Calu3 (cell line): ENCODE measurements at regions of chr2 and their contacts with region 1.

Region 1: DNA sequence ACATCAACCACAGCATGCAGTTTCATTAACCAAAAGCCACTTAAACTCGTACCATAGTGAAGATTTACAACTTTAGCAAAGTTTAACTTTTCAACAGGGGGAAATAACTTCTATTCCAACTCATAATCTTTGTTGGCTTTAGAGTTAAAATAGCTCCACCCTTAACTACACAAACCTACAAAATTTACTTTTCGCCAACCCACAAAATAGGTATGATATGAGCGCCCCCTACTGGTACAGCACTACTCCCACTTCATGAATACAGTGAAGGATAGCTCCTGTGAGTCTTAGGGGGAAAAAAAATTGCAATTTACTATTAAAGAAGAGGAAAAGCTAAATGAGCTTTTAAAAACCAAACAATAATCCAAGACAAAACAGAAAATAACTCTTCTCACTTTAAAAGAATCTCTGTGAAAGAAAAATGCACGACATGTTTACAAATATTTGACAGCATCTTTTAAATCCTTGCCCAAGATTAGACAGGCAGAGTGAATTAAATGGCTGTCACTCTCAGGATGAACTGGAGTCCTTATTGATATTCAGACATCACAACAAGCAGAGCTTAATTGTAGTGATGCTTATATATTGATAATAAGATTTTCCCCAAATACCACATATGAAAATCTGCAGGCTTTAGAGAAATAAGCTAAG is 32.2 kb downstream of the TMEFF2 start:
- DNase-seq: peak; percentile 78
- H3K4me3 Mint-ChIP-seq: no peak overlapping the region
- H3K27ac Mint-ChIP-seq: no peak overlapping the region
- H3K4me1 Mint-ChIP-seq: no peaks in the 10 kb centered on the region
- H3K27me3 Mint-ChIP-seq: no peaks in the 10 kb centered on the region
- CTCF ChIP-seq: peak; percentile 91

Region 2: DNA sequence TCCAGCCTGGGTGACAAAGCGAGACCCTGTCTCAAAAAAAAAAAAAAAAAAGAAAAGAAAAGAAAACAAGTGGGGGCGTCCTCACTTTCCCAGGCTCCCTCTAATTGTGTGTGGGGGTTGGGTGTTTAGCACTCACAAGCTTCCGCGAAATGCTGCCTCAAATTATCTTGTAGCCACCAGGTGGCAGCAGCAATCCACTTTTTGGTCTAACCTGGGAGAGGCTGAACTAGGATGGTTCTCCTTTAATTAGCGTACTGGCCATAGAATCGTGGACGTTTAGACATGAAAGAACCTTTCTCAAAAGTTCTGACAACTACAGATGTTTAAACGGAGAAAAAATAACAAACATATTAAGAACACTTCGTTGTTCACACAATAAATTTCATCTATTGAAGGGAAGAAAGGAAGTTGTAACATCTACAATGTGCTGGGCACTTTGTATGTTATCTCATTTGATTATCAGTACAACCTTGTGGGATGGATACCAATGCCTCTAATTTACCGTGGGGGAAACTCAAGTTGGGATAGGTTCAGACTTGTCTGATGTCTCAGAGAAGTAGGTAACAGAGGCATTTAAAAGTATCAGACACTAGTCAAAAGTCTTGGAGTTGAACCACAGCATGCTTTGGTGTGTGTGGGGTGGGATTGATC is 607.3 kb before region 1 on chr2:
- CTCF ChIA-PET with region 1: interaction called, 8 read pairs
- intact Hi-C with region 1: loop called (anchors 1 kb)
- DNase-seq: peak; percentile 88
- H3K4me3 Mint-ChIP-seq: no peak overlapping the region
- H3K27ac Mint-ChIP-seq: no peak overlapping the region
- H3K4me1 Mint-ChIP-seq: peaks cover 8% of the 10 kb centered on the region
- H3K27me3 Mint-ChIP-seq: no peaks in the 10 kb centered on the region
- CTCF ChIP-seq: peak; percentile 58

Region 3: GRCh38 chr2:191758518-191759507 is 403.7 kb before region 1 on chr2:
- CTCF ChIA-PET with region 1: interaction called, 23 read pairs
- intact Hi-C with region 1: loop called (anchors 2 kb)
- DNase-seq: peak; percentile 85
- H3K4me3 Mint-ChIP-seq: peak overlapping the region; percentile 61
- H3K27ac Mint-ChIP-seq: peak overlapping the region; percentile 50
- H3K4me1 Mint-ChIP-seq: no peaks in the 10 kb centered on the region
- H3K27me3 Mint-ChIP-seq: no peaks in the 10 kb centered on the region
- CTCF ChIP-seq: peak; percentile 83

Region 4: GRCh38 chr2:191869178-191869577 is 293.3 kb before region 1 on chr2:
- CTCF ChIA-PET with region 1: interaction called, 10 read pairs
- intact Hi-C with region 1: loop called (anchors 1 kb)
- DNase-seq: peak; percentile 30
- H3K4me3 Mint-ChIP-seq: no peak overlapping the region
- H3K27ac Mint-ChIP-seq: peak overlapping the region; percentile 55
- H3K4me1 Mint-ChIP-seq: peaks cover 51% of the 10 kb centered on the region
- H3K27me3 Mint-ChIP-seq: no peaks in the 10 kb centered on the region
- CTCF ChIP-seq: peak; percentile 28

Region 5: GRCh38 chr2:192035731-192036442 is 126.6 kb before region 1 on chr2:
- CTCF ChIA-PET with region 1: no interaction called
- intact Hi-C with region 1: no loop called
- DNase-seq: no peak
- H3K4me3 Mint-ChIP-seq: no peak overlapping the region
- H3K27ac Mint-ChIP-seq: no peak overlapping the region
- H3K4me1 Mint-ChIP-seq: peaks cover 7% of the 10 kb centered on the region
- H3K27me3 Mint-ChIP-seq: no peaks in the 10 kb centered on the region
- CTCF ChIP-seq: no peak